ENCODE measurements at regions of chr1 and their contacts with region 1.

Region 1: DNA sequence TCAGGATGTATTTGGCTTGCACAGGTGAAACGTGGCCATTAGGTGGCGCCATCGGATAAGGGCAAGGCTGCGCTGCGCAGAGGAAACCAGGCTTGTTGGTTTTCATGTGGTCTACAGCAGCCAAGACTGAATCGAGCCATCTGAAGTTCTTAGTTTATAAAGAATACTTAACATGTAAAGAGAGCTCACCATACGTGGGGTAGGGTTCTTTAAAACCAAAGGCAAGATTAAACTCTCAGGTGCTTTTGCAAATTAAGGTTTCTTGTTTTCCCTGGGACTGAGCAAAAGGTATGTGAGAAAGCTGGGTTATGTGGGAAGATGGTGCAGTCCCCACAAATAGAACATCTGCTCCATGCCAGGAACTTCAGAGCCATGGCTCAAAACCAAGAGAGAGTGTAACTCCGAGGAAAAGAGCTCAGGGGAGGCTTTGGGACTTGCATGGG is 9.3 kb downstream of the MASP2 start:
- DNase-seq: peak; percentile 93
- ATAC-seq: peak; percentile 97
- H3K4me3 Mint-ChIP-seq: no peak overlapping the region
- H3K27ac Mint-ChIP-seq: no peak overlapping the region
- H3K4me1 Mint-ChIP-seq: peaks cover 9% of the 10 kb centered on the region
- H3K27me3 Mint-ChIP-seq: no peaks in the 10 kb centered on the region

Region 2: DNA sequence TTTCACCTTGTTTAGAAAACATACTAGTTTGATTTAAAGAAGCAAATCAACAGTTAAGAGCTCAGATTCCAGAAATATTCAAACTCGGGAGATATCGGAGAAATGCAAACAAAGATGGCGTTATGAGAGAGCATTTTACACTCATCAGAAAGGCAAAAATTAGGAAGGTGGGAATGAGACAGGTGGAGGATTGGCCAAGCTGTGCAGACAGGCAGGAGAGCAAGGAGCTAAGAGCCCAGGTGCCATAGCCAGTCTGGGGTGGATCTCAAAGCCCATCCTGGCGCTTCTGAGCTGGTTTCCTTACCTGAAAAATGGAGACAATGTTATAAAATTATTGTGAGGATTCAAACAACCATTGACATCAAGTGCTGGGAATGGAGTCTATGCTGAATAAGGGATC is 44.9 kb before region 1 on chr1:
- CTCF ChIA-PET with region 1: no interaction called
- POLR2A ChIA-PET with region 1: no interaction called
- DNase-seq: no peak
- ATAC-seq: no peak
- H3K4me3 Mint-ChIP-seq: no peak overlapping the region
- H3K27ac Mint-ChIP-seq: no peak overlapping the region
- H3K4me1 Mint-ChIP-seq: no peaks in the 10 kb centered on the region
- H3K27me3 Mint-ChIP-seq: no peaks in the 10 kb centered on the region

Region 3: GRCh38 chr1:11012250-11013171 is 25.2 kb before region 1 on chr1 and contains the start of gene TARDBP:
- CTCF ChIA-PET with region 1: interaction called, 15 read pairs
- POLR2A ChIA-PET with region 1: no interaction called
- DNase-seq: peak; percentile 92
- ATAC-seq: peak; percentile 90
- H3K4me3 Mint-ChIP-seq: peak within 1 kb of the TSS; percentile 92
- H3K27ac Mint-ChIP-seq: peak within 1 kb of the TSS; percentile 99
- H3K4me1 Mint-ChIP-seq: peaks cover 32% of the 10 kb centered on the region
- H3K27me3 Mint-ChIP-seq: no peaks in the 10 kb centered on the region
- total RNA-seq, gene TARDBP: 175 to 178 TPM

Region 4: GRCh38 chr1:11059990-11060830 is 22.4 kb after region 1 on chr1 and contains the start of gene SRM:
- CTCF ChIA-PET with region 1: interaction called, 101 read pairs
- POLR2A ChIA-PET with region 1: interaction called, 3 read pairs
- DNase-seq: peak; percentile 91
- ATAC-seq: peak; percentile 94
- H3K4me3 Mint-ChIP-seq: peak within 1 kb of the TSS; percentile 96
- H3K27ac Mint-ChIP-seq: peak within 1 kb of the TSS; percentile 98
- H3K4me1 Mint-ChIP-seq: peaks cover 54% of the 10 kb centered on the region
- H3K27me3 Mint-ChIP-seq: no peaks in the 10 kb centered on the region
- total RNA-seq, gene SRM: 146 to 154 TPM

Region 5: DNA sequence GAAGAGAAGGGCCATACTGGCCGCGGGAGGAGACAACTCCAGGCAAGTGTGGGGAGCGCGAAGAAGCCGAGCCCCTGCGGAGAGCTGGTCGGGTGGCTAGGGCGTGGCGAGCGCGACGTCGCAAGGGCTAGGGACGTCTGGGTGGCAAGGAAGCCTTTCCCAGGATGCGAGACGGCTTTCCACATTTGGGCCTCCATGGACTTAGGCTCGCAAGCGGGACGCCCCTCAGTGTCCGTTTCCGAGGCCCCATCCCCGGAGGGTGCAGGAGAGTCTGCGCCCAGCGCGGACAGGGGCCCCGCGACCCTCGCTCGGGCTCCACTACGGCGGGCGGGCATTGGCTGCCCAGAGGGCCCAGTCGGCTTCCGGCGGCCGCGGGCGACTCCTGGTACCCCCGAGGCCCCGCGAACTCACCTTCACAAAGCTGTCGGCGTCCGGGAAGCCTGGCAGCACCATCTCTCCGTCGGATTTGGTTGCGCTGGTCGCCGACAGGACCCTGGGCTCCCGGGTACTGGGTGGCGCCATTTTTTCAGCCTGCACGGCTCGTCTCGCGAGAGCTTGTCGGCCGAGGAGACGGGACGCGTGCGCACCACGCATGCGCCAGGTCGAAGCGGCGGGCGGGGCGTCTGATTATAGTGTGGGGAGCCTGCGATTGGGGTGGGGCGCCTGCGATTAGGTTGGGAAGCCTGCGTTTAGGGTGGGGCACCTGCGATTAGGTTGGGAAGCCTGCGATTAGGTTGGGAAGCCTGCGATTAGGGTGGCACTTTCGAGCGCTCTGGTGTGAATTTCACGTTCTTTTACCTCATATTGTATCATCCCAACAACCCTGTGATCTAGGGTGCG is 61.8 kb after region 1 on chr1 and contains the start of gene EXOSC10:
- CTCF ChIA-PET with region 1: interaction called, 94 read pairs
- POLR2A ChIA-PET with region 1: interaction called, 3 read pairs
- DNase-seq: peak; percentile 97
- ATAC-seq: peak; percentile 96
- H3K4me3 Mint-ChIP-seq: peak within 1 kb of the TSS; percentile 91
- H3K27ac Mint-ChIP-seq: peak within 1 kb of the TSS; percentile 96
- H3K4me1 Mint-ChIP-seq: peaks cover 13% of the 10 kb centered on the region
- H3K27me3 Mint-ChIP-seq: no peaks in the 10 kb centered on the region
- total RNA-seq, gene EXOSC10: 86.1 to 89.8 TPM

Region 6: DNA sequence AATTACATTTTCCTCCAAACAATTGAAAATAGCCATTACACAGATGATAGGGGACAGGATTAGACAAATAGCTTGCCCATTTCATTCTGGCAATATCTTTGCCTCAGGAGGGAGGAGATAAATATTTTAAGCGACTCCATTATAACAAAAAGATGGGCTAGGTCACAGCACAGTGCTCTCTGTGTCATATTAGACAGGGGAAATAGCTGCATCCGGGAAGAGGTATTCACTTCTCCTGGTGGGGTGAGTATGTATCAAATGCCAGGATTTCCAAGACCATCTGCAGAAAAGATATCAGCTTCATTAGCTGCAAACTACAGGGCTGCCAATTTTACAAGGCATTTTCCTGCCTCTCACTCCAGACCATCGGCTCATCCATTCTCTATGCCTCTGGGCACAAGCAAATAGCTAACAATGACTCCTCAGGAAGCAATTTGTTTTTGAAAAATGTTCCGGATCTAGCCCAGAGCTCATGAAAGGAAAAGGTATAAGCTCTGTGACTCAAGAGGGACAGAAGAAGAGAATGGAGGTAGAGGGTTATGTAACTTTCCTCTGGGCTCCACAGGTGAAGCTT is 109.5 kb after region 1 on chr1:
- CTCF ChIA-PET with region 1: interaction called, 13 read pairs
- POLR2A ChIA-PET with region 1: no interaction called
- DNase-seq: no peak
- ATAC-seq: no peak
- H3K4me3 Mint-ChIP-seq: no peak overlapping the region
- H3K27ac Mint-ChIP-seq: no peak overlapping the region
- H3K4me1 Mint-ChIP-seq: peaks cover 6% of the 10 kb centered on the region
- H3K27me3 Mint-ChIP-seq: no peaks in the 10 kb centered on the region

Region 7: DNA sequence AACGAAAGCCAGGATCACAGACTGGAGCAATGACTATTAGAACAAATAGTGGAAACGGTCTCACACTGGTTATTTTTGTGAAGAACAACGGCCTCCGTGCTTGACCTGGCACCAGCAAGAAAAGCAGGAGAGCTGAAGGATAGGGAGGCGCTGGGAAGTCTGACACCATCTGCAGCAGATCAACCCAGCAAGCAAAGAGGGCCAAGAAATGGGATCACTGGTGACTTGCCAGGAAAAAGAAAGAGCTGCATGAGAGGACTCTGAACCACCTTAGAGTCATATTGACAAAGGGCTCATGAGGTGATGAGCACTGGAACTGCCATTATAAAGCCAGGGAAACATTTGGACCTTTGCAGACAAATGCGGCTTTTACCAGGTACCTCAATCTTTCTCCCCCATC is 199.6 kb after region 1 on chr1:
- CTCF ChIA-PET with region 1: interaction called, 23 read pairs
- POLR2A ChIA-PET with region 1: interaction called, 3 read pairs
- DNase-seq: no peak
- ATAC-seq: no peak
- H3K4me3 Mint-ChIP-seq: no peak overlapping the region
- H3K27ac Mint-ChIP-seq: peak overlapping the region; percentile 61
- H3K4me1 Mint-ChIP-seq: peaks cover 11% of the 10 kb centered on the region
- H3K27me3 Mint-ChIP-seq: no peaks in the 10 kb centered on the region

Region 8: DNA sequence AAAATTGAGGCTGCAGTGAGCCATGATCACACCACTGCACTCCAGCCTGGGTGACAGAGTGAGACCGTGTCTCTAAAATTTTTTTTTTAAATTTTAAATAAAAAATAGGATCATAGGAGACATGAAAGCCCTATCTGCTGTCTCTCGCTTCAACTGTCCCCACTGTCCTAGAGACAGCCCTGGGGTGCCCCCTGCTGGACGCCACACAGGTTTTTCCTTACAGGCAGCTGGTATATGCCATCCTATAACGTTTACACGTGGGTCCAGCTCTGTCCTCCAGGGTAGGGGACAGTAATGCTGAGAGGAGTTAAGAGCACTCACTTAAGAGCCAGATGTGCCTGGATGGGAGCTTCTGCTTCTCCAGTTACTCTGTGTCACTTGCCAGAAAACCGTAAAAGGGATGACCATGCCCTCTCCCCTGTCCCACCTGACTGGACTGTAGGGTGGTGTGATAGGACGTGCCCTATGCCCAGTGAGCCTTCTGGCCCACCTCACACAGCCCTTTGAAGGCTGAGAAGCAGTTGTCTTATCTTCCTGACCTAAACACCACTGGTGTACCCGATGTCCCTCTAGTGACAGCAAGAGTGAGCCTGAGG is 608.0 kb after region 1 on chr1:
- CTCF ChIA-PET with region 1: interaction called, 84 read pairs
- POLR2A ChIA-PET with region 1: no interaction called
- DNase-seq: peak; percentile 91
- ATAC-seq: peak; percentile 55
- H3K4me3 Mint-ChIP-seq: no peak overlapping the region
- H3K27ac Mint-ChIP-seq: no peak overlapping the region
- H3K4me1 Mint-ChIP-seq: peaks cover 16% of the 10 kb centered on the region
- H3K27me3 Mint-ChIP-seq: peaks cover 2% of the 10 kb centered on the region

Measured in activated CD8-positive, alpha-beta T cell treated with anti-CD3 and anti-CD28 coated beads, Interleukin-2, amount 10 ng/mL, durations not matched to agents 7 days and 5 days (primary cell).